Activated CD4-positive, alpha-beta T cell treated with anti-CD3 and anti-CD28 coated beads for 36 hours (primary cell): ENCODE measurements at regions of chr7 and their contacts with region 1.

Region 1: DNA sequence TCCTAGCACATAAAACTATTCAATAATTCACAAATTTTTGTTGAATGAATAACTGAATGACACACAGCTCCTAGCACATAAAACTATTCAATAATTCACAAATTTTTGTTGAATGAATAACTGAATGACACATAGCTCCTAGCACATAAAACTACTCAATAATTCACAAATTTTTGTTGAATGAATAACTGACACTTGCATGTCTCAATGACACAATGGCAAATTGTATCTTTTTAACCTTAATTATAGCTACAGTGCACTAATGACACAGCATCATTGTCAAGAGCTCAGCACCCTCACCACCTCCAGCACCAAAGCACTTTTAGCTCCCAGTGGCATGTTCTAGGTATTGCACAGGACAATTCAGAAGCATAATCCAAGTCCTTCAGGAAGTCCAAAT is 131.6 kb downstream of the PDE1C start:
- DNase-seq: no peak
- ATAC-seq: no peak
- H3K4me3 Mint-ChIP-seq: no peak overlapping the region
- H3K27ac Mint-ChIP-seq: no peak overlapping the region
- H3K4me1 Mint-ChIP-seq: no peaks in the 10 kb centered on the region
- H3K27me3 Mint-ChIP-seq: no peaks in the 10 kb centered on the region

Region 2: DNA sequence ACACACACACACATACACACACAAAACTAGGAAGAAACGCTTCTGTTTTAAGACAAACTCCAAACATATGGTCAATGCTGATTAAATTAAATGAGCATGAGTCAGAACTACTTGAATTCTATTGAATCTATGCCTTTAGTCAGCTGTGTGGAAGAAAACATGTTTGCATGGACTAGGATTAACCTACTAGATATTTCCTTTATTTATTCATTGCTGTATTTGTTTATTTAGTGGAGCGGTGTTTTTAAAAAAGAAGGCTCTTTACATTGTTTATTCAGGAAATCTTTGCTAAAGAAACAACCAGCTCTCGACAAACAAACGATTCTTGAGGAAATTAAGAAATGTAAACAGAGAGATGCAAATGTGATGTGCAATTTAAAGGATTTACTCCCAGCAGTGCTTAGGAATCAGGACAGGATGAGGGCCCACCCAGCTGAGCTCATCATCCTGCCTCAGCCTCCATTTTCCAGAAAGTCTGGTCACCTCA is 48.3 kb after region 1 on chr7:
- CTCF ChIA-PET with region 1: no interaction called
- POLR2A ChIA-PET with region 1: no interaction called
- intact Hi-C with region 1: loop called in 1 of 2 experiments (anchors 5 kb)
- DNase-seq: no peak
- ATAC-seq: no peak
- H3K4me3 Mint-ChIP-seq: no peak overlapping the region
- H3K27ac Mint-ChIP-seq: no peak overlapping the region
- H3K4me1 Mint-ChIP-seq: no peaks in the 10 kb centered on the region
- H3K27me3 Mint-ChIP-seq: no peaks in the 10 kb centered on the region